Breast epithelium (tissue), 4 donors: ENCODE measurements at regions of chr4 and their contacts with region 1.

Region 1: GRCh38 chr4:17523662-17524061 is 8.7 kb downstream of the CLRN2 start:
- DNase-seq: no peak
- H3K4me3 ChIP-seq: no peak overlapping the region
- H3K27ac ChIP-seq: no peak overlapping the region
- H3K4me1 ChIP-seq: no peaks in the 10 kb centered on the region
- H3K27me3 ChIP-seq: peaks cover 0 to 3% of the 10 kb centered on the region in 2 donors
- CTCF ChIP-seq: no peak
- POLR2A ChIP-seq: no peak

Region 2: GRCh38 chr4:17545374-17546140 is 21.9 kb after region 1 on chr4:
- intact Hi-C with region 1: loop called (anchors 1 kb)
- DNase-seq: no peak
- H3K4me3 ChIP-seq: no peak overlapping the region
- H3K27ac ChIP-seq: no peak overlapping the region
- H3K4me1 ChIP-seq: no peaks in the 10 kb centered on the region
- H3K27me3 ChIP-seq: no peaks in the 10 kb centered on the region
- CTCF ChIP-seq: no peak
- POLR2A ChIP-seq: no peak